B cell (primary cell): ENCODE measurements at regions of chr10 and their contacts with region 1.

Region 1: DNA sequence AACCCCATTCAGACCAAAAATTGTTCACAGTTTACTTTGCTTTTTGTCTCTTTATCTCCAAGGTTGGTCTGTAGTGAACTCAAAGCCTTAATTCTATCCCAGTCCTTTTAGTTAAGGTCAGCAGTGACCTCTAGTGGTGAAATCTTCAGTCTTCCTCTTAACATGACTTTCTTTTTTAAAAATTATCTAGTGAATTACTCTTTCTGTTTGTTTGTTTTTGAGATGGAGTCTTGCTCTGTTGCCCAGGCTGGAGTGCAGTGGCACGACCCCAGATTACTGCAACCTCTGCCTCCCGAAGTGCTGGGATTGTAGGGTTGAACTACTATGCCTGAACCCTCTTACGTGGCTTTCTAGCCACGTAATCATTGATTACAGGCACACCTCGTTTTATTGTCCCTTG is 25.0 kb downstream of the ZNF487 start:
- DNase-seq: peak; percentile 84
- ATAC-seq: peak; percentile 60
- H3K4me3 ChIP-seq: no peak overlapping the region
- H3K4me3 Mint-ChIP-seq: no peak overlapping the region
- H3K27ac ChIP-seq: no peak overlapping the region
- H3K27ac Mint-ChIP-seq: no peak overlapping the region
- H3K4me1 ChIP-seq: peaks cover under 1 to 3% of the 10 kb centered on the region in 2 donors
- H3K4me1 Mint-ChIP-seq: peaks cover 6% of the 10 kb centered on the region
- H3K27me3 ChIP-seq: no peaks in the 10 kb centered on the region
- H3K27me3 Mint-ChIP-seq: no peaks in the 10 kb centered on the region
- CTCF ChIP-seq: peak; percentile 82

Region 2: DNA sequence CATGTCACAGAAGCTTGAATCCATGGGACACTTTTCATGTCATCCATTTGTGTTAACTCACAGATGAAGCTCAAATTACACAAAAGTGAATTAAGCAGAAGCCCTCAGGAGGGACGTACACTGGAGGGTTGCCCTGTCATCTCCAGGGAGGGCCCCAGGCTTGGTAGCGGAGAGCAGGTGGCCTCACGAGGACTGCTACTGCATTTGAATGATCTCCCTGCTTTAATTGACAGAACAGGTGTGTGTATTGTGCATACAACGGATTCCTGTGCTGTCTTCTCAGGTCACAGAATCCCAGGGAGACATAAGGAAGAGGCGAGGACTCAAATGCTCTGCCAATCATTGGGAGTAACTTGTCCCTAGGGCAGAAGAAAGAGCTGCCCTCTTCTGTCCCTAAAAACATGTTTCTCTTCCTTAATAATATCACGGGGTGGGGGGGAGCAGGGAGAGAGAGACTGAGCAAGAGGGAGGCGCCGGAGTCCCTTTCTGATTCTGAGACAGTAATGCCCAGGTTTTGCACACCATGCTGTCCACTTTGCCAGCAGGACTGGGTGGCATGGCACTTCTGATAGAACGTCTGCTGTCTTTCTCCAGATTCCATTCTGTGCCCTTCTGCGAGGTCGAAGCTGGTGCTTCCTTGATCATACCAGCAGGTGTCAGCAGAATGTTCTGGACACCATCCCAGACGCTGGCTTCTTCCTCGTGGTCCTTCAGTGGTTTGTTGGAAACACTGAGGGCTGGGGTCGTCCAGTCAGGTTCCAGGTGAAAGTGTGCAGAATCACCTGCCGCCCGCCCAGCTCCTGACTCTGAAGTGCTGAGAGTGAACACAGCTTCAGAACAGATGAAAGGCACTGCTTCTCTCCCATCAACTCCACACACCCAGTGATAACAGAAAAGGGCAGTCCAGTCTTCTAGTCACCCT is 168.9 kb before region 1 on chr10:
- CTCF ChIA-PET with region 1: interaction called, 8 read pairs
- POLR2A ChIA-PET with region 1: no interaction called
- intact Hi-C with region 1: loop called (anchors 1 kb)
- DNase-seq: peak; percentile 67
- ATAC-seq: peak; percentile 66
- H3K4me3 ChIP-seq: no peak overlapping the region
- H3K4me3 Mint-ChIP-seq: no peak overlapping the region
- H3K27ac ChIP-seq: no peak overlapping the region
- H3K27ac Mint-ChIP-seq: no peak overlapping the region
- H3K4me1 ChIP-seq: peaks cover 8 to 17% of the 10 kb centered on the region in 2 donors
- H3K4me1 Mint-ChIP-seq: peaks cover 8% of the 10 kb centered on the region
- H3K27me3 ChIP-seq: peaks cover 0 to 15% (median 7%) of the 10 kb centered on the region in 4 experiments
- H3K27me3 Mint-ChIP-seq: peaks cover 26% of the 10 kb centered on the region
- CTCF ChIP-seq: peak; percentile 73

Region 3: GRCh38 chr10:43754569-43755260 is 292.8 kb after region 1 on chr10:
- CTCF ChIA-PET with region 1: no interaction called
- POLR2A ChIA-PET with region 1: no interaction called
- intact Hi-C with region 1: no loop called
- DNase-seq: no peak
- ATAC-seq: no peak
- H3K4me3 ChIP-seq: no peak overlapping the region
- H3K4me3 Mint-ChIP-seq: no peak overlapping the region
- H3K27ac ChIP-seq: no peak overlapping the region
- H3K27ac Mint-ChIP-seq: no peak overlapping the region
- H3K4me1 ChIP-seq: no peaks in the 10 kb centered on the region
- H3K4me1 Mint-ChIP-seq: no peaks in the 10 kb centered on the region
- H3K27me3 ChIP-seq: no peaks in the 10 kb centered on the region
- H3K27me3 Mint-ChIP-seq: no peaks in the 10 kb centered on the region
- CTCF ChIP-seq: no peak